ENCODE measurements at regions of chr17 and their contacts with region 1.

Region 1: DNA sequence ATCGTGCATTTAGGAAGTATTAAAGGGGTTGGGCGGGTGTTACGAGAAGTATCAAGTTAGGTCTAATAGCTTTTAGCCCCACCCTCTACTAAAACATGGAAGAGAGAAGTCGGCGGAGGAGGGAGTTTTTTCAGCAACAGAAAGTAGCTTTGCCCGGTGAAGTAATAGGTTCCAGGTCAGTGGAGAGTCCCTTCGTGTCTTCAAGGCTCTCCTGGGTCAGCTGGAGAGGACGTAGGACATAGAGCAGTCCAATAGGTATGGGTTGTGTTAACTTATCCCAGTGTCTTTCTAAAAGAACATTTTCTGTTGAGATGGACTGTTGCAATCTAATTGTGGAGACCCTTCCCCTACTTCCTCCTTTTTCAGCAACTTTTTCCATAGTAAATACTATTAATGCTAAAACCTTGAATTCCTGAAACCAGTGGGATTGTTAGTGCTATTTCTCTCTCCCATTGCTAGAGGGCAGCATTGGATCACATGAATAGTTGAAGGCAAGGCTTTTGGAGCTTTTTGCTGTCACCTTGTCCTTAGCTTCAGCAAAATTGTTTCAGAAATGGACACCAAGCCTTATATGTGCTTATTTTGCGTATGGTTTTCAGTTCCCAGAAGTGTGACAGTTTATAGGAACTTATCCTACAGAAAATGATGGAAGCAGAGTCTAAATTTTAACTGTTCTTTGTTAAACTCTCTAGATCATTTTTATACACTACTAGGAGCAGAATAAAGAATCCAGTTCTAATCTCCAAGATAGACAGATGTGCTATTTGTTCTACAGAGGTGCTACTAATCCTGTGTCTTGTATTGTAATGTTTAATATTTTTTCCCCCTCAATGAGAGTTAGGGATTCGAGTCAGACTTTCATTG is 38.4 kb downstream of the UTP18 start:
- DNase-seq: no peak
- ATAC-seq: no peak
- H3K4me3 Mint-ChIP-seq: no peak overlapping the region
- H3K27ac Mint-ChIP-seq: no peak overlapping the region
- H3K4me1 Mint-ChIP-seq: peaks cover 3% of the 10 kb centered on the region
- H3K27me3 Mint-ChIP-seq: no peaks in the 10 kb centered on the region
- CTCF ChIP-seq: peak; percentile 55

Region 2: DNA sequence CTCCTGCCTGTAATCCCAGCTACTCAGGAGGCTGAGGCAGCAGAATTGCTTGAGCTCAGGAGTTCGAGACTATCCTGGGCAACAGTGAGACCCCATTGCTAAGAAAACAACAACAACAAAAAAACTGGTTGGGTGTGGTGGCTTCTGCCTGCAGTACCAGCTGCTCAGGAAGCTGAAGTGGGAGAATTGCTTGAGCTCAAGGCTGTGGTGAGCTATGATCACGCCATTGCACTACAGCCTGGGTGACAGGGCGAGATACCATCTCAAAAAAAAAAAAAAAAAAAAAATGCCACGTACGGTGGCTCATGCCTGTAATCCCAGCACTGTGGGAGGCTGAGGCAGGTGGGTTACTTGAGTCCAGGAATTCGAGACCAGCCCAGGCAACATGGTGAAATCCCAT is 98.4 kb before region 1 on chr17:
- CTCF ChIA-PET with region 1: no interaction called
- POLR2A ChIA-PET with region 1: no interaction called
- intact Hi-C with region 1: no loop called
- DNase-seq: no peak
- ATAC-seq: no peak
- H3K4me3 Mint-ChIP-seq: no peak overlapping the region
- H3K27ac Mint-ChIP-seq: no peak overlapping the region
- H3K4me1 Mint-ChIP-seq: no peaks in the 10 kb centered on the region
- H3K27me3 Mint-ChIP-seq: no peaks in the 10 kb centered on the region
- CTCF ChIP-seq: no peak

Region 3: DNA sequence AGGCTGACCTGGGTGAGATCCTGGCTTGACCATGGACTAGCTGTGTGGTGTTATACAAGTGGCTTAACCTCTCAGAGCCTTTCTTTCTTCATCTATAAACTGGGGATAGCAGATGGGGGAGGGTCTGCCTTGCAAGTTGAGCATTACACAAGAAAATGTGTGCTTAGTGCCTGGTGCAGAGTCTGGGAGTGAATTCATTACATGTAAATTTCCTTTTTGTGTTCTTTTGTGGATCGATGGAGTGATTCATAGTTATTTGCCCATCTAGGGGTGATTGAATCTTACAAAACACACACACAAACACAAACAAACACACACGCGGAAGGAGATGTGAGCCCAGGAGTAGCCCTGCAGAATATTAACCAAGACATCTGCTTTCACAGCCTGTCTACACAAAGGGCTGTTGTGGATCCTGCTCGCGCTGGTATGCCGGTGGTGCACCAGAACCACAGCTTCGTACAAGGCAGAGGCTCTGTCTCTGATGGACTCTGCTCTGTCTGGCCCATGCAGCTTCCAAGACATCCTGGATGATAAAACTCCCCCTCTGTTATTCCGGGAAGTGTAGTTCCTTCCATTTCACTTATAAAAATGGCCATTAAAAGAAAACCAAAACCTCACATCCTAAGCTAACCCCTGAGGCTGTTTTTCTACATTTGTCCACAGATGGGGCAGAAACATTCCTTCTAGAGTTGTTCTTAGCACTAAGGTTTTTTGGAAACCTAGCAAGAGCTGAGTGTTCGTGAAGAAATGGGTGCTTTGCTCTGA is 47.7 kb after region 1 on chr17:
- CTCF ChIA-PET with region 1: no interaction called
- POLR2A ChIA-PET with region 1: no interaction called
- intact Hi-C with region 1: no loop called
- DNase-seq: no peak
- ATAC-seq: no peak
- H3K4me3 Mint-ChIP-seq: no peak overlapping the region
- H3K27ac Mint-ChIP-seq: no peak overlapping the region
- H3K4me1 Mint-ChIP-seq: no peaks in the 10 kb centered on the region
- H3K27me3 Mint-ChIP-seq: peaks cover 4% of the 10 kb centered on the region
- CTCF ChIP-seq: no peak

Region 4: DNA sequence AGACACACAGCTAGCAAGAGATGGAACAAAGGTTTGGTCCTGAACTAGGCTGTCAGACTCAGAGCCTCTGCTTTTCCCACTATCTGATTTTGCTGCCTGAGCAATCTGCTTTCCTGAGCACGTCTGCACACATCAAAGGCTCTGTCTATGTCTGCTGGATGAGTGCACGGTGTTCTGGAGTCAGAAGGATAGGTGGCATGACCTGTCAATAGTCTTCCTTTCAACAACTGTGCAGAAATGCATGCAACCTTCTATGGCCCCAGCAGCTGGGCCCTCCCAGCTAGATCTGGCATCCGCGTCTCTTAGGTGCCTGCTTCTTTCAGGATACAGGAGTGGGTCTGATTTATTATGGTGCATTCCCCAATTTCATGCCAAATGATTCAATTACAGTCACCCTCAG is 99.9 kb after region 1 on chr17:
- CTCF ChIA-PET with region 1: no interaction called
- POLR2A ChIA-PET with region 1: no interaction called
- intact Hi-C with region 1: no loop called
- DNase-seq: no peak
- ATAC-seq: no peak
- H3K4me3 Mint-ChIP-seq: no peak overlapping the region
- H3K27ac Mint-ChIP-seq: no peak overlapping the region
- H3K4me1 Mint-ChIP-seq: no peaks in the 10 kb centered on the region
- H3K27me3 Mint-ChIP-seq: no peaks in the 10 kb centered on the region
- CTCF ChIP-seq: no peak

Region 5: DNA sequence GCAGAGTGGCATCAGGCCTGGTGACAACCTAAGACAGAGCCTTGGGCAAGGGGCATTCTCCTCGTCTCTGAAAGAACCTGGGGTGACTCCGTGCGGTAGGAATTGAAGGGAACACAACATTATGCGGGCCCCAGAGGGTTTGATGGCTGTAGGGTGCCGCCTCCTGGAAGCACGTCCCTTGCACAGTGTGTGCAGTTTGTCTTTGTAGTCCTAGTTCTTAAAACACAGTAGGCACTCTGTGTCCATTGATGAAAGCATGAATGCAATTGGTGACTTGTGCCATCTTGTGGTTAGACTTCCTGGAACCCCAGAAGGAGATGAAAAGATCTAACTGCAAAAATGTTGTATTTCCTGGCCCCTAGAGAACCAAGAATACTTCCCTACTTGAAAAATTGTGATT is 241.4 kb after region 1 on chr17:
- CTCF ChIA-PET with region 1: interaction called, 13 read pairs
- POLR2A ChIA-PET with region 1: no interaction called
- intact Hi-C with region 1: no loop called
- DNase-seq: peak; percentile 8
- ATAC-seq: no peak
- H3K4me3 Mint-ChIP-seq: no peak overlapping the region
- H3K27ac Mint-ChIP-seq: no peak overlapping the region
- H3K4me1 Mint-ChIP-seq: peaks cover 6% of the 10 kb centered on the region
- H3K27me3 Mint-ChIP-seq: no peaks in the 10 kb centered on the region
- CTCF ChIP-seq: no peak